ENCODE measurements at regions of chr15 and their contacts with region 1.

Region 1: GRCh38 chr15:78638658-78639314 is 2.2 kb downstream of the CHRNB4 start:
- DNase-seq: peak in 3 of 10 donors; percentile 19 to 35 (median 32)
- H3K4me3 ChIP-seq: no peak overlapping the region
- H3K27ac ChIP-seq: no peak overlapping the region
- H3K27me3 ChIP-seq: peaks cover 0 to 37% (median 16%) of the 10 kb centered on the region in 45 donors
- CTCF ChIP-seq: peak in 55 of 56 donors; percentile 38 to 76 (median 63)

Region 2: DNA sequence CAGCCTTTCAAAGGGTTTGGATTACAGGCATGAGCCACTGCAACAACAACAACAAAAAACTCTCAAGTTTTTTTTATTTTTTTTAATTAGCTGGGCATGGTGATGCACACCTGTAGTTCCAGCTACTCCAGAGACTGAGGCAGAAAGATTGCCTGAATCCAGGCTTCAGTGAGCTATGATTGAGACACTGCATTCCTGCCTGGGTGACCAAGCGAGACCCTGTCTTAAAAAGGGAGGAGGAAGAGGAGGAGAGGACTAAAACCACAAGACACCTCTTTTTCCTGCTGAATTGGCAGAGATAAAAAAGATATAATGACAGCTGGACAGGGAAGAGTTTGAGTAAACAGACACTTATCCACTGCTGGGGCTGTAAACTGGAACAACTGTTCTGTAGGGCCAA is 24.9 kb after region 1 on chr15:
- intact Hi-C with region 1: no loop called
- DNase-seq: no peak
- H3K4me3 ChIP-seq: no peak overlapping the region
- H3K27ac ChIP-seq: no peak overlapping the region
- H3K27me3 ChIP-seq: peaks cover 0 to 3% (median 0%) of the 10 kb centered on the region in 45 donors
- CTCF ChIP-seq: no peak

Region 3: GRCh38 chr15:78709263-78709882 is 70.6 kb after region 1 on chr15:
- intact Hi-C with region 1: loop called (anchors 5 to 10 kb)
- DNase-seq: peak; percentile 39 to 77 (median 57)
- H3K4me3 ChIP-seq: peak overlapping the region in 25 of 59 donors; percentile 1 to 47 (median 30)
- H3K27ac ChIP-seq: no peak overlapping the region
- H3K27me3 ChIP-seq: peaks cover 0 to 36% (median 9%) of the 10 kb centered on the region in 45 donors
- CTCF ChIP-seq: peak; percentile 34 to 92 (median 84)

Measured in dorsolateral prefrontal cortex (tissue), 120 donors.